ENCODE measurements at regions of chr17 and their contacts with region 1.

Region 1: GRCh38 chr17:65181237-65182061 is 44.3 kb downstream of the RGS9 start:
- DNase-seq: no peak
- H3K4me3 ChIP-seq: no peak overlapping the region
- H3K27ac ChIP-seq: no peak overlapping the region
- H3K4me1 ChIP-seq: peaks cover 16% of the 10 kb centered on the region
- H3K27me3 ChIP-seq: no peaks in the 10 kb centered on the region
- CTCF ChIP-seq: no peak

Region 2: DNA sequence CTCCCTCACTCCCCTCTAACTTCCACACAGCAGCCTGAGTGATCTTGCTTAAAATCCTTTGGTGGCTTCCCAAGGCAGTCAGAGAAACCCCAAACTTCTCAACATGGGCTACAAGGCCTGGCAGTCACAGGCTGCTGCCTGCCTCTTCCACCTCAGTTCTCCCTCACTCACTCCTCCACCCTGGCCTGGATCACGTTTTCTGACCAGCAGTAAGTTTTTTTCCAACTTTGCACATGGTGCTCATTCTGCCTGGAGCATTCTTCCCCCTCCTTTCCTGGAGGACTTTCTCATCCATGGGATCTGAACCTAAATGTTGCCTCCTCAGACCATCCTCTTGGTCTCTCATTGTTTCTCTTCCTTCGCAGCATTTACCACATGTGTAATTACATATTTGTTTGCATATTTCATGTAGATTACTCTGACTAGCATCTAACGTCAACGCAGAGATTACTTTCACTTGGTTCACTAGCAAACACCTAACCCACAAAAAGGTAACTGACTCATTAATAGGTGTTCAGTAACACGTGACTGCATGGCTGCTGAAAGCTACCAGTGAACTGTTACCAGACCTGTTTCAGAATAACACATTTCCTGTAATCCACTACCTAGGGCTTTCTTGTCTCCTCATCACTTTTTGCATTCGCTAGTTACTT is 142.0 kb before region 1 on chr17:
- CTCF ChIA-PET with region 1: no interaction called
- POLR2A ChIA-PET with region 1: no interaction called
- intact Hi-C with region 1: no loop called
- DNase-seq: peak; percentile 35 to 87
- H3K4me3 ChIP-seq: no peak overlapping the region
- H3K27ac ChIP-seq: peak overlapping the region; percentile 45
- H3K4me1 ChIP-seq: peaks cover 17% of the 10 kb centered on the region
- H3K27me3 ChIP-seq: no peaks in the 10 kb centered on the region
- CTCF ChIP-seq: no peak

Region 3: GRCh38 chr17:65137021-65137991 is 44.1 kb before region 1 on chr17 and contains the start of gene RGS9:
- CTCF ChIA-PET with region 1: interaction called, 11 read pairs
- POLR2A ChIA-PET with region 1: no interaction called
- intact Hi-C with region 1: no loop called
- DNase-seq: peak; percentile 49 to 86
- H3K4me3 ChIP-seq: peak within 1 kb of the TSS; percentile 49
- H3K27ac ChIP-seq: no peak within 1 kb of the TSS
- H3K4me1 ChIP-seq: peaks cover 11% of the 10 kb centered on the region; the same call in 1 of the 2 replicates
- H3K27me3 ChIP-seq: peaks cover 10% of the 10 kb centered on the region; the same call in 1 of the 2 replicates
- CTCF ChIP-seq: peak; percentile 98
- total RNA-seq, gene RGS9: 5.7 and 6.1 TPM in 2 replicates

Region 4: DNA sequence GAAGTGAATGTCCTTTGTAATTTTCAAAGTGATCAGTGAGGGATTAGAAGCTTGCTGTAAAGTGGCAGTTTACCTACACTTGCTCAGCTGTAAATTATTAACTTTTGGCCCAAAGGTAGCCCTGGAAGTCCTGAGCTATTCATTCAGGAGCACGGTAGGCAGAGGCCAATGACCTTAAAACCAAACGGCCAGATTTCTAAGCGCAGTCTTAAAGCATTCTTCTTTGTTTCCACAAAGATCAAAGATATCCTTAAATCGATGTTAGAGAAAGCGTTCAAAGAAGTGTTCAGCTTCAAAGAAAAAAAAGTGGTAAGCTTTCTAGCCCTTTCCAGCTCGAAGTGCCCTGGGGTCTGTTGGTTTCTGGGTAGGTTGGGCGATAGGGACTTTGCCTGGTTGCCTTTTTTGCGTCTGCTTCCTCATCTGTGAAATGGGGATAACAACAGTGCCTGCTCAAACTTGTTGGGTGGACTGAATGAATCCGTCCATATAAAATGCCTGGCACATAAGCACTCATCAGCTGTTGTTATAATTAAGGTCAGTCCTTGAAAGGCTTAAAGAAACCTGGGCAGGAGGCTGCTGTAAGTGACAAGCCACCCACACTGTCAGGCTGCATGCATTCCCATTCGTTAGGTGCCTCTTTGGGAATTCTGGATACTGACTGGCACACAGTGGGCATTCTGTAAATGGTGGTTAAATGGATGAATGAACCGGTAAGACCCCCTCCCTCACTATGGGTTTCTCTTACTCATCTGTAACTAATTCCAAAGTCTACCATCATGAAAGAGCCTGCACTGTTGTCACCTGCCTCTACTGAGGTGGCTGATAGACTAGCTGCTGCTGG is 1234.1 kb after region 1 on chr17:
- CTCF ChIA-PET with region 1: no interaction called
- POLR2A ChIA-PET with region 1: interaction called, 18 read pairs
- intact Hi-C with region 1: no loop called
- DNase-seq: no peak
- H3K4me3 ChIP-seq: no peak overlapping the region
- H3K27ac ChIP-seq: no peak overlapping the region
- H3K4me1 ChIP-seq: no peaks in the 10 kb centered on the region
- H3K27me3 ChIP-seq: no peaks in the 10 kb centered on the region
- CTCF ChIP-seq: no peak

Measured in PC-9 (cell line).